ENCODE measurements at regions of chr5 and their contacts with region 1.

Region 1: GRCh38 chr5:110625376-110625999 is 101.0 kb downstream of the TMEM232 start:
- DNase-seq: no peak
- H3K4me3 Mint-ChIP-seq: no peak overlapping the region
- H3K27ac Mint-ChIP-seq: no peak overlapping the region
- H3K4me1 Mint-ChIP-seq: no peaks in the 10 kb centered on the region
- H3K27me3 Mint-ChIP-seq: no peaks in the 10 kb centered on the region

Region 2: GRCh38 chr5:110045158-110045557 is 580.3 kb before region 1 on chr5:
- intact Hi-C with region 1: loop called (anchors 10 kb)
- DNase-seq: no peak
- H3K4me3 Mint-ChIP-seq: no peak overlapping the region
- H3K27ac Mint-ChIP-seq: no peak overlapping the region
- H3K4me1 Mint-ChIP-seq: peaks cover 10% of the 10 kb centered on the region
- H3K27me3 Mint-ChIP-seq: peaks cover 4% of the 10 kb centered on the region

Region 3: GRCh38 chr5:110441035-110441434 is 184.5 kb before region 1 on chr5:
- intact Hi-C with region 1: loop called (anchors 5 kb)
- DNase-seq: no peak
- H3K4me3 Mint-ChIP-seq: no peak overlapping the region
- H3K27ac Mint-ChIP-seq: no peak overlapping the region
- H3K4me1 Mint-ChIP-seq: no peaks in the 10 kb centered on the region
- H3K27me3 Mint-ChIP-seq: peaks cover 3% of the 10 kb centered on the region

Region 4: GRCh38 chr5:110687485-110687884 is 62.0 kb after region 1 on chr5:
- intact Hi-C with region 1: no loop called
- DNase-seq: no peak
- H3K4me3 Mint-ChIP-seq: no peak overlapping the region
- H3K27ac Mint-ChIP-seq: no peak overlapping the region
- H3K4me1 Mint-ChIP-seq: peaks cover 10% of the 10 kb centered on the region
- H3K27me3 Mint-ChIP-seq: peaks cover 2% of the 10 kb centered on the region